ENCODE measurements at regions of chr13 and their contacts with region 1.

Region 1: GRCh38 chr13:78978381-78978998 is 319.5 kb upstream of the OBI1 start:
- DNase-seq: peak; percentile 83
- H3K4me3 Mint-ChIP-seq: no peak overlapping the region
- H3K27ac Mint-ChIP-seq: no peak overlapping the region
- H3K4me1 Mint-ChIP-seq: no peaks in the 10 kb centered on the region
- H3K27me3 Mint-ChIP-seq: peaks cover 7% of the 10 kb centered on the region

Region 2: DNA sequence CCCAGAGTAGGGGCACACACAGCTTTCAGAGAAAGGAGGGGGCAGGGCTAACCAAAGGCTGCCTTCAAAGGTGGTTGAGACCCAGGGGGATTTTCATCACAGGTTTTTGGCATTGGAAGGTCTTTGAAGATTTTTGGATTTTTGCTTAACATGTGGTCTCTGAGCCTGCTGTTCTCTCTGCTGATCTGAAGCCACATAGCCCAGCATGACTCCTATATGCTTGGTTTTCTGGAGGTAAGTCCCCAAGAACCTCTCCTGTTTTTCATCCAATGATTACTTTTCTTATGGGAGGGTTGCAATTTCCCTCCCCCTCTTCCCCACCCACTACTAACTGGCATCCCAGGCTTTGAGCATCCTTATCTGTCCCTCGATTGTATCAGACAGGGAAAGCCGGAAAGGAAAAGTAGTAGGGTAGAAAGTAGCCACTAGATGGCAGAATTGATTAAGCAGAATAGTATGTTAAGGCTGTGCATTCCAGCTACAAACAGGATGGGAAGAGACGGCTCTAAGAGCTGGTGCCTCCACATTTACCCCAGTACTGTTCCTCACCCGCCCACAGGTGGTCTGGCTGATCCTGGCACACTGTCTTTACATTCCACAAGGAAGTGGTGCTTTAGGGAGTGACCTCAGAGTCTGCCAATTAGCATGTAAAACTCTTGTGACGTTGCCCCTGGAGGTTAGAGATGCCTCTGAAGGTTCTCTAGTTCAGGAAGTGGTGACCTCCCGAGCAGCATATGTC is 840.9 kb before region 1 on chr13:
- intact Hi-C with region 1: loop called (anchors 1 kb)
- DNase-seq: peak; percentile 66
- H3K4me3 Mint-ChIP-seq: peak overlapping the region; percentile 45
- H3K27ac Mint-ChIP-seq: no peak overlapping the region
- H3K4me1 Mint-ChIP-seq: peaks cover 5% of the 10 kb centered on the region
- H3K27me3 Mint-ChIP-seq: peaks cover 3% of the 10 kb centered on the region

Region 3: GRCh38 chr13:78241278-78241919 is 737.1 kb before region 1 on chr13:
- intact Hi-C with region 1: loop called (anchors 2 kb)
- DNase-seq: peak; percentile 58
- H3K4me3 Mint-ChIP-seq: no peak overlapping the region
- H3K27ac Mint-ChIP-seq: no peak overlapping the region
- H3K4me1 Mint-ChIP-seq: no peaks in the 10 kb centered on the region
- H3K27me3 Mint-ChIP-seq: peaks cover 2% of the 10 kb centered on the region

Region 4: GRCh38 chr13:79998381-79998880 is 1019.9 kb after region 1 on chr13:
- intact Hi-C with region 1: no loop called
- DNase-seq: no peak
- H3K4me3 Mint-ChIP-seq: no peak overlapping the region
- H3K27ac Mint-ChIP-seq: no peak overlapping the region
- H3K4me1 Mint-ChIP-seq: no peaks in the 10 kb centered on the region
- H3K27me3 Mint-ChIP-seq: no peaks in the 10 kb centered on the region

Measured in activated CD4-positive, alpha-beta T cell treated with anti-CD3 and anti-CD28 coated beads, Interleukin-2, amount 10 ng/mL, durations not matched to agents 24 days and 14 days (primary cell).